Dorsolateral prefrontal cortex (tissue), 120 donors: ENCODE measurements at regions of chr4 and their contacts with region 1.

Region 1: DNA sequence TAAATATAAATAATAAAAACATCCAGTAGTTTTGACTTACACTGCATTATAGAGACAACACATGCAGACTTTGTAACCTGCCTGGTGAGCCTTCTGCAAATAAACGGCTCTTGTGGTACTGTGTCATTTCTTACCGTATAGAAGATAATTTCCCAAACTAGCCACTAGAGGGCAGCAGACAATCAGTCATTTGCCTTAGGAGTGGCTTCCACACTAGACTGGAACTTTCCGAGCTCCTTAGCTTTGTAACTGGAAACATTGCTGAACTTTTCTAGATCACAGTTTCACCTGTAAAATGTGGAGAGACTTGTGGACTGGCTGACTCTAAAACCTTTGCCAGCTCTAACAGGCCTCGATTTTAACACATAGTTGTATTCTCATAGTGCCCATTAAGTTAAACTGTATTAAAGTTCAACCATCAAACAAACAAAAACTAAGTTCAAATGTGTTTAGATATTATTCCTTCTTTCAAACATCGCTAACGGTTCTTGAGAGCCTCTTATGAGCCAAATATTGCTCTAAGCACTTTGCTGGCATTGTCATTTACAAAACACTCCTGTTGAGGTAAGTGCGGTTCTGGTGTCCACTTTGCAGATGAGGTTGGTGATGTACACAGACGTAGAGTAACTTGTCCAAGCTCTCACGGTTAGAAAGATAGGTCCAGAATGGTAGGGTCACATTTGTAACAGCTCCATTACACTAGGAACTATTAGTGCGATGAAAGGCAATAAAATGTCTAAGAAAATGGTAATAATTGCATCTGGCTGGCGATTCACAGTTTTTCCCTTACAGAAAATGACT is 345.5 kb downstream of the ANK2 start:
- DNase-seq: peak in 3 of 10 donors; percentile 34 to 64 (median 61)
- H3K4me3 ChIP-seq: peak overlapping the region in 7 of 59 donors; percentile 2 to 27 (median 7)
- H3K27ac ChIP-seq: peak overlapping the region in 23 of 59 donors; percentile 4 to 67 (median 38)
- H3K27me3 ChIP-seq: no peaks in the 10 kb centered on the region
- CTCF ChIP-seq: peak; percentile 82 to 98 (median 94)

Region 2: DNA sequence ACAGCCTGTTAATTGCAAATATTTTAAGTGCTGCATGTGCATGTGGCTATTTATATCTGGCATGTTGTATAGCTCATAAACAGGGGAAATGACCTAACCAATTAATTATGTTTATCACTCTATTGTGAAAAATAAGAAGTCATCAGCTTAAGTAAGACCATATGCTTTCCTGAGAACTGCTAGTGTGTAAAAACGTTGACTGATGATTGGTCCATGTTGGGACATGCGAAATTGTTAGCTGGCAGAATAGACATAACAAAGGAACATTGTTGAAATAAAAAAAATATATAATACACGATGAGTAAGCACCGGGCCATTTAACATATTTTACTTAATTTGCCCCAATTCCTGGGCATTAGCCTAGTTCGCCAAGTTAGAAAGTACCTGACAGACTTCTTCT is 138.0 kb before region 1 on chr4:
- intact Hi-C with region 1: no loop called
- DNase-seq: no peak
- H3K4me3 ChIP-seq: no peak overlapping the region
- H3K27ac ChIP-seq: no peak overlapping the region
- H3K27me3 ChIP-seq: no peaks in the 10 kb centered on the region
- CTCF ChIP-seq: no peak

Region 3: DNA sequence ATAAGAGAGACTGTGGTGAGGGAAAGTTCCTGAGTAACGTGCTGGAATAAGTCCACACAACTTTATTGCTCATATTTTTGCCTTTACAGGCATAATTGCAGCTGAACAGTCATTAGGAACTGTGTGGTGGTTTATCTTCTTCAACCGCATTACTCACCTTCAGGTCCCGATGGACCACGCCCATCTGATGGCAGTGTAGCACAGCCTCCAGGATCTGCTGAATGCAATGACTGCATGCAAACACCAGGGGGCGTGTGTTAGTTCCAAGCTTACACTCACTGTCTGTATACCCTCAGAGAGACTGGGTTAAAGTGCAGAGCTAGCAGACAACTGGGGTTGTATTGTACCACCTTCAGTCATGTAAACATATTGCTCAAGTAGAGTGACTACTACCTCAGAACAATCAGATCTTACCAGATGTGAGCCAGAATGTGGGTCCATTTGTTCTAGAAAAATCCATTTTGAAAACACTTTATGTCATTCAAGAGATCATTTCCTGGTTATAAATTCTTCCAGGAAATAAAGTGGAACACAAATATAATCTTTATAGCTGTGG is 152.6 kb after region 1 on chr4:
- intact Hi-C with region 1: loop called (anchors 2 to 10 kb)
- DNase-seq: peak; percentile 64 to 88 (median 78)
- H3K4me3 ChIP-seq: peak overlapping the region in 3 of 59 donors; percentile 5 to 8 (median 7)
- H3K27ac ChIP-seq: peak overlapping the region in 17 of 59 donors; percentile 9 to 74 (median 28)
- H3K27me3 ChIP-seq: no peaks in the 10 kb centered on the region
- CTCF ChIP-seq: peak; percentile 86 to 99 (median 97)

Region 4: DNA sequence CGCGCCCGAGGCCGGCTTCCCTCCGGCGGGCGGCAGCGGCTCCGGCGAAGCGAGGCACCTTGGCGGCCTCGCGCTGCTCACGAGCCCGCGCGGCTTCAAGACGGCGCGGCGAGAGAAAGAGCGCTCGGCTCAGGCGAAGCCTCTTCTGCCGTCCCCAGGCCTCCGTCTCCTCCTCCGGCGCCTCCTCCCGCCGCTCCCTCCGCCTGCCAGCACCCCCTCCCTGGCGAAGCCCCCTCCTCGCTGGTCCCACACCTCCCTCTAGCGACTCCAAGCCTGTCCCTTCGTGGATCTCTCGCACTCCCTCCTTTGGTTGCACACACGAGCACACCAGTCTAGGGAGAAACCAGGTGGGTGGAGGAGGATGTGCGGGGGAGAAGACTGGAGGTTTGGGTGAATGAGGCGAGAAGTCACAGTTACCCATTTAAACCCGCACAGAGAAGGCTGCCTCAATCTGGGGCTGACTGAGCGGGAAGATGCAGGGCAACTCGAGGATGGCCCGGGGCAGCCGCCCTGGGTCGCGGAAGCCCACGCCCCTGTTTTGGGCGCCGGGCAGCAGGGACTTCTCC is 366.8 kb after region 1 on chr4 and contains the start of gene CAMK2D:
- intact Hi-C with region 1: loop called (anchors 2 to 5 kb)
- DNase-seq: peak; percentile 67 to 94 (median 86)
- H3K4me3 ChIP-seq: peak within 1 kb of the TSS; percentile 53 to 95 (median 85)
- H3K27ac ChIP-seq: peak within 1 kb of the TSS; percentile 86 to 100 (median 99)
- H3K27me3 ChIP-seq: no peaks in the 10 kb centered on the region
- CTCF ChIP-seq: peak in 54 of 56 donors; percentile 31 to 80 (median 65)
- total RNA-seq, gene CAMK2D: 46.8 to 134 (median 89.2) TPM

Region 5: DNA sequence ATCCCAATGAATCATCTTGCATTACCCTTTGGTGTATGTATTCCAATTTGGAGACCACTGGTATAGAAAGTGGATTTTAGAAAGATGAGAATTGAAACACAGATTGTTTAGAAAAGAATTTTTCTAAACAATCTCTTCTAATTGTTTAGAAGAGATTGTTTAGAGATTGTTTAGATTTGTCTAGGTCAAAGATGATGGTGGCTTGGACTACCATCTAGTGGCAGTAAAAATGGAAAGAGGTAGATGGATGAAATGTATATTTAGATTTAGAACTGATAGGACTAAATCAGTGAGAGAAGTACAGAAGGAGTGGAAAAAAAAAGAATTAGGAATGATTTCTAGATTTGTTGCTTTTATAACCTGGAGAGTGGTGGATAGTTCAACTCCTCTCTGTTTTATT is 513.9 kb after region 1 on chr4:
- intact Hi-C with region 1: loop called (anchors 5 kb)
- DNase-seq: no peak
- H3K4me3 ChIP-seq: no peak overlapping the region
- H3K27ac ChIP-seq: no peak overlapping the region
- H3K27me3 ChIP-seq: no peaks in the 10 kb centered on the region
- CTCF ChIP-seq: peak in 36 of 56 donors; percentile 8 to 61 (median 38)

Region 6: GRCh38 chr4:114057746-114058145 is 662.8 kb after region 1 on chr4:
- intact Hi-C with region 1: no loop called
- DNase-seq: no peak
- H3K4me3 ChIP-seq: no peak overlapping the region
- H3K27ac ChIP-seq: no peak overlapping the region
- H3K27me3 ChIP-seq: no peaks in the 10 kb centered on the region
- CTCF ChIP-seq: no peak

Region 7: DNA sequence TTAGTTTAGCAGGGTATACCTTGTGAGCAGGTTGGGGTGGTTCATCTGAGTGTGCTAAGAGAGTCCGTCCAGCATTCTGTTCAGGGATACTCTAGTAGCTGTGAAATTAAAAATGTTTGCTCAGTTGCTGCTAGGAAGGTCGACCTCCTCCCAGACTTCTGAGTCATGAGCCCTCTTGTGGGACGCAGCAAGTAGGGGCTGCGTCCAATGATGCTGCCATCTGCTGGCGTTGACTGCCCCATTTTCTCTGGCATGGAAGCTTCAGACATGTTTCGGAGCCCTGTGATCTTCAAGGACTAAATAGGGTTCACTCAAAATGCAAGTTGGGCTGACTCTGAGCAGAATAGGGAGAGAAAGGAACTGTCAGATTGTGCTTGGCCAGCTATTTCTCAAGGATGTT is 785.6 kb after region 1 on chr4:
- intact Hi-C with region 1: loop called in 1 of 2 experiments (anchors 5 kb)
- DNase-seq: peak in 6 of 10 donors; percentile 4 to 43 (median 25)
- H3K4me3 ChIP-seq: no peak overlapping the region
- H3K27ac ChIP-seq: no peak overlapping the region
- H3K27me3 ChIP-seq: no peaks in the 10 kb centered on the region
- CTCF ChIP-seq: peak in 47 of 56 donors; percentile 14 to 65 (median 46)